Sigmoid colon (tissue), 7 donors: ENCODE measurements at regions of chr7 and their contacts with region 1.

Region 1: GRCh38 chr7:74173866-74174605 is at the start of gene EIF4H:
- DNase-seq: peak; percentile 98
- H3K4me3 ChIP-seq: peak within 1 kb of the TSS; percentile 90 to 97 (median 96)
- H3K27ac ChIP-seq: peak within 1 kb of the TSS; percentile 97 to 99 (median 98)
- H3K4me1 ChIP-seq: peaks cover 0 to 54% (median 52%) of the 10 kb centered on the region in 4 donors
- H3K27me3 ChIP-seq: no peaks in the 10 kb centered on the region
- CTCF ChIP-seq: no peak
- EP300 ChIP-seq: no peak
- POLR2A ChIP-seq: peak; percentile 33 to 45
- total RNA-seq, gene EIF4H: 201 to 274 (median 228) TPM

Region 2: GRCh38 chr7:74061840-74062539 is 112.0 kb before region 1 on chr7:
- intact Hi-C with region 1: loop called (anchors 5 kb)
- DNase-seq: peak; percentile 96
- H3K4me3 ChIP-seq: peak overlapping the region in 3 of 4 donors; percentile 34 to 41 (median 34)
- H3K27ac ChIP-seq: peak overlapping the region; percentile 85 to 93 (median 90)
- H3K4me1 ChIP-seq: peaks cover 0 to 37% (median 33%) of the 10 kb centered on the region in 4 donors
- H3K27me3 ChIP-seq: no peaks in the 10 kb centered on the region
- CTCF ChIP-seq: no peak
- EP300 ChIP-seq: peak in 2 of 4 donors; percentile 53 to 57
- POLR2A ChIP-seq: peak in 1 of 2 donors; percentile 35

Region 3: DNA sequence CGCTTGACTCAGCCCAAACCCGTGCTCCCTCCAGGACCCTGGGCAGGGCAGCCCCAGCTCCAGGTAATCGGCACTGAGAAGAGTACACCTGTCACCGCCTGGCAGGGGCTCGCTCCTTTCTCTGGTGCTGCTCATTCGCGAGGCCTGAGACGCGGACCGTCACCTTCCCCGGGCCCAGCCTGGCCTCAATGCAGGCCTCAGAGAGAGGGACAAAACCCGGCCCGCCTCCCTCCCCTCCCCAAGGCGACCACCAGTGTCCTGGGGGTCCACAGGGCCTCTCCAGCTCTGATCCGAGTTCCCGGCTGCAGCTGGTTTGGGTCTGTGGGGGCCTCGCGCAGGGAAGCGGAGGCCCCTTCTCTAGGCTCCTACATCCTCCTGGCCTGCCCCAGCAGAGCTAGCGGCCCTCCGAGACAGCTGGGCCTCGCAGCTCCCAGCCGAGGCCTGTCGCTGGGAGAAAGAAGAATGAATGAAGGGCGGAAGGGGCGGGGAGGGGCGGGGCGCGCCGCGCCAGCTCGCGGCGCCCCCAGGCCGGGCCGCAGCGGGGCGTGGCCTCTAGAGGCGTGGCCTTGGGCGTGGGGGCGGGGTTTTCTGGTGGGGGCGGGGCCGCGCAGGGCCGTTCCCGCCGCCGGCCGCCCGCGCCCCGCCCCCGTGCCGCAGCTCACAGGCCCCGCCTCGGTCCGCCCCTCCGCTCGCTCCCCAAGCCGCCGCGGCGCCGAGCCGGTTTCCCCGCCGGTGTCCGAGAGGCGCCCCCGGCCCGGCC is 90.7 kb before region 1 on chr7 and contains the start of gene LIMK1:
- intact Hi-C with region 1: loop called (anchors 5 kb)
- DNase-seq: peak; percentile 89
- H3K4me3 ChIP-seq: peak within 1 kb of the TSS; percentile 58 to 93 (median 76)
- H3K27ac ChIP-seq: peak within 1 kb of the TSS; percentile 52 to 74 (median 56)
- H3K4me1 ChIP-seq: peaks cover 0 to 19% (median 15%) of the 10 kb centered on the region in 4 donors
- H3K27me3 ChIP-seq: no peaks in the 10 kb centered on the region
- CTCF ChIP-seq: no peak
- EP300 ChIP-seq: no peak
- POLR2A ChIP-seq: no peak
- total RNA-seq, gene LIMK1: 4.6 to 15.0 (median 6.5) TPM

Region 4: GRCh38 chr7:74133671-74134048 is 40.4 kb before region 1 on chr7:
- intact Hi-C with region 1: no loop called
- DNase-seq: no peak
- H3K4me3 ChIP-seq: no peak overlapping the region
- H3K27ac ChIP-seq: no peak overlapping the region
- H3K4me1 ChIP-seq: no peaks in the 10 kb centered on the region
- H3K27me3 ChIP-seq: no peaks in the 10 kb centered on the region
- CTCF ChIP-seq: no peak
- EP300 ChIP-seq: no peak
- POLR2A ChIP-seq: no peak

Region 5: DNA sequence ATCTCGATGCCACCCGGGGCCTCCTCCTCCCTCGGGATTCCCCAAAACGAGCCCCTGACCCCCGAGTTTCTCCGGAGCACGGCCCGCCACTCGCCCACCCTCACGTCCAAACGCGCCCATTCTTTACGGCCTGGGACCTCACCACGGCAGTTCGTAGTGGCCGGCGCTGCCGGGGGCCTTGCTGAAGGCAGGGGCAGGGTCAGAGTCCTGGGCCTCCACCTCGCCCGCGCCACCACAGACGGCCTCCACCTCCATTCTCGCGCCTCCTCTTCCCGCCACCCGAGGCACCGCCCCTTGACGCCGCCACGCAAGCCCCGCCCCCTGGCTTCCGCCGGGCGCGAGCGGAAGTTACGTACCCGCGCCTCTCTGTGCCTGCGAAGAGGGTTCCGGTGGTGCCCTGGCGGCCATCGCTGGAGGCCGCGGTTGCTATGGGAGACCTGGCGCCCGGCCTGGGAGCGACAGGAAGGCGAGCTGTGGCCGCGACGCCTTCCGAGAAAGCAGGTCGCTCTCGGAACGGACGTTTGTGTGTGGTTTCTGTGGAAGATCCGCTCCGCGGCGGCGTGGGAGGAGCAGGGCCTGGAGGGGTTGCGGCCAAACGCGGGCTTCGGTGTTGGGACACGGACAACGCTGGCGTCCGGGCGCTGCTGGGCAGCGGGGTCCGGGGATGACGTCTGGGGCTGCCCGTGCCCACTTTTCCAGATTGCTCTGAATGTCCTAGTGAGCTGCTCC is 80.3 kb after region 1 on chr7 and contains the start of gene RFC2:
- intact Hi-C with region 1: loop called (anchors 5 kb)
- DNase-seq: peak; percentile 98
- H3K4me3 ChIP-seq: peak within 1 kb of the TSS; percentile 59 to 90 (median 72)
- H3K27ac ChIP-seq: peak within 1 kb of the TSS; percentile 89 to 96 (median 90)
- H3K4me1 ChIP-seq: peaks cover 0 to 21% (median 16%) of the 10 kb centered on the region in 4 donors
- H3K27me3 ChIP-seq: no peaks in the 10 kb centered on the region
- CTCF ChIP-seq: peak; percentile 21 to 47 (median 43)
- EP300 ChIP-seq: peak in 2 of 4 donors; percentile 44 to 70
- POLR2A ChIP-seq: peak; percentile 59 to 70
- total RNA-seq, gene RFC2: 3.3 to 17.8 (median 14.8) TPM